ENCODE measurements at regions of chr11 and their contacts with region 1.

Region 1: DNA sequence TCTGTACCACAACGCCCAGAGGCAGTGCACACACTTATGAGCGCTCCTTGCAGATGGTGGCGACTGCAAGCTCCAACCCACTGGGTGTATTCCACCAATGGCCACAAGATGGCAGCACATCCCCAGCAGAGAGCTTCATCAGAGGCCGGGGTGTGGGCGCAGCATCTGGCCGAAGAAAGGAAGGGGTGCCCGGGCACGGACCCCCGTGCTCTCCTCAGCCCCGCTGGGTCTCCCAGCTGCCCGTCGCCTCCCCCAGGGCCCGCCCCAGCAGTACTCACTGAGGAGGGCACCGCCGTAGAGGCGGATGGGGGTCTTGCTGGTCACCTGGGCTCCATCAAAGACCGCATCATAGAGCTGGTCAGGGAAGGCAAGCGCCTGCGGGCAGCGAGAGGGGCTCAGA is 14.2 kb downstream of the TP53I11 start:
- DNase-seq: peak; percentile 83
- ATAC-seq: peak; percentile 88
- H3K4me3 ChIP-seq: no peak overlapping the region
- H3K27ac ChIP-seq: no peak overlapping the region
- H3K4me1 ChIP-seq: peaks cover 5% of the 10 kb centered on the region
- H3K27me3 ChIP-seq: no peaks in the 10 kb centered on the region
- CTCF ChIP-seq: peak; percentile 96

Region 2: DNA sequence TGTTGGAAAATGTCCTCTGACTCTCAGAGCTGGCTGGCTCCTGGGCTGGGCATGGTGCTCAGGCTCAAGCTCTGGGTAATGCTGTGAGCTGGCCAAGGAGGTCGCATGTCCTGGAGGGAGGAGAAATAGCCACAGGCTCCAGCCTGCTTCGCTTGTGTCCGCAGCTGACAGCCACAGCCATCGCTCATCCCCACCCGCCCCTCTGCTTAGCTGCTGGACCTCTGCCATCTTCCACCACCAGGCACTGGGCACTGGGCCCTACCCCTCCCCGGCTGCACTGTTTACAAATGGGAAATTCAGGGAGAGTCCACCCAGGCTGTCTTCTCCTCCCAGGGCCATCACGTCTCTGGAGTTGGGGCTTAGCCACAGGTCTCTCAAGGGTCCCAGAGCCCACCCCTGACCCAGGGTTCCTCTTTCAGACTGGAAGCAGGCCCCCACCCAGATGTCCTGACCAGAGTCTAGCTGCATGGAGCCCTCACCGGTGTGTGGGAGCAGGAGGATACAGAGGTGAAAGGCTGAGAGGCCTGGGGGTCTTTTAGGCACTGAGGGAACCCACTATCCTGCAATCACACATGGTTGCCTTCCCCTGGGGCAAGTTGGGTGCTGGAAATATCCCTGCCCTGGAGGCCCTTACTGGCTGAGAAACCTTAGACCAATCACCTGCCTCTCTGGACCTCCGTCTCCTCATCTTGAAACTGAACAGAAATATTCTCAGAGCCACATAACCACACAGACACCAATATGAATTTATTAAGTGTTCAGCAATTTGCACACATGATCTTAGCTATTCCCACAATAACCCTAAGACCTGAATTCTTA is 308.4 kb before region 1 on chr11:
- intact Hi-C with region 1: no loop called
- DNase-seq: peak; percentile 76
- ATAC-seq: peak; percentile 71
- H3K4me3 ChIP-seq: no peak overlapping the region
- H3K27ac ChIP-seq: peak overlapping the region; percentile 55
- H3K4me1 ChIP-seq: peaks cover 32% of the 10 kb centered on the region
- H3K27me3 ChIP-seq: no peaks in the 10 kb centered on the region
- CTCF ChIP-seq: peak; percentile 18

Region 3: DNA sequence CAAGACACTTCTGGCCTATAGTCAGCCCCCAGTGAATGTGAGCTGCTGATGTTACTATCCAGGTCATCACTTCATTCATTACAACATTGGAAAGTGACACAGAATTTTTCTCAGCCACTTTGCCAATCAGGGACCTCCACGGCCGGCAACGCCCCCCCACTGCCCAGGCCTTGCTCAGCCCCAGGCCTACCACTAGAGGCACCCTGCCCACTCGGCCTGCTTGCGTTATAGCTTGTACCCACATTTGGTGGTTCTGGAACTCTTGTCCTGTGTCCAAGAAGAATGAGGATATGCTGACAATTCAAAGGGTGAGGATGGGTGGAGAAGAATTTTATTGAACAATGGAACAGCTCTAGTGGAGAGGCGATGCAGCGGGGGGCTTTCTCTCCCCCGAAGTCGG is 113.5 kb before region 1 on chr11:
- intact Hi-C with region 1: no loop called
- DNase-seq: peak; percentile 33
- ATAC-seq: no peak
- H3K4me3 ChIP-seq: no peak overlapping the region
- H3K27ac ChIP-seq: no peak overlapping the region
- H3K4me1 ChIP-seq: no peaks in the 10 kb centered on the region
- H3K27me3 ChIP-seq: no peaks in the 10 kb centered on the region
- CTCF ChIP-seq: peak; percentile 20

Region 4: DNA sequence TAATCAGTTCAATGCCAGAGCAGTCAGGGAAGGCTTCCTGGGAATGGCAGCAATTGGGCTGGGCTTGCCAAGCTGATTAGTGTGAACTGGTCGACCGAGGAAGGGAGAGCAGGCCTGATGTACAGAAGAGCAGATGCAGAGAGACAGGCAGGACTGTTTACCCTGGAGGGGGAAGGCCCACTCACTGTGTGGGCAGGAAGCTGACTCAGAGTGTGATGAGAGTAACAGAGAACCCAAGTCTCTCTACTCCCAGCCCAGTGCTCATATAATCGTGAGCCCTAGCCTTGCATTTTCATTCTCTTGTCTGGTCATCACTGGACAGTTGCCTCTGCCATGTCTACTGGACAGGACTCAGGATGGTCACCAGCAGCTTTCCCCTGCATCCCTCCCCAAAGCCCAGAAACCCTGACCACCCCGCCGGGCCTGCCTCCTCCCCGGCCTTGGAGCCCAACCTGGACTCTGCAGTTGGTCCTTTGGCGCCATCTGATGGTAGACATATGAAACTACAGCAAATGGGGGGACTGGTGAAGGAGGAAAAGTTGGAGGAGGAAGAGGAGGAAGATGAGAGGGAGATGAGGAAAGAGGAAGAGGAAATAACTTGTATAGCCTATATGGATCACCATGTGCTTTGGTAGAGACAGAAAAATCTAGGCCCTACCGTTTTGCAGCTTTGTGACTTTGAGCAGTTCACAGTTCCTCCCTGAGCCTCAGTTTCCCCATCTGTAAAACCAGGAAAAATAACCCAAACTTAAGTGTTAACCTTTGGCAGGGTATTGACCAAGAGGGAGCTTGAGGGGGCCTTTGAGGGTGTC is 166.5 kb after region 1 on chr11:
- intact Hi-C with region 1: loop called (anchors 5 kb)
- DNase-seq: no peak
- ATAC-seq: peak; percentile 81
- H3K4me3 ChIP-seq: no peak overlapping the region
- H3K27ac ChIP-seq: no peak overlapping the region
- H3K4me1 ChIP-seq: peaks cover 6% of the 10 kb centered on the region
- H3K27me3 ChIP-seq: peaks cover 5% of the 10 kb centered on the region
- CTCF ChIP-seq: peak; percentile 91

Region 5: GRCh38 chr11:45298718-45299117 is 362.2 kb after region 1 on chr11:
- intact Hi-C with region 1: loop called (anchors 10 kb)
- DNase-seq: no peak
- ATAC-seq: no peak
- H3K4me3 ChIP-seq: no peak overlapping the region
- H3K27ac ChIP-seq: no peak overlapping the region
- H3K4me1 ChIP-seq: no peaks in the 10 kb centered on the region
- H3K27me3 ChIP-seq: no peaks in the 10 kb centered on the region
- CTCF ChIP-seq: no peak